Left cardiac atrium (tissue), 4 donors: ENCODE measurements at regions of chr4 and their contacts with region 1.

Region 1: DNA sequence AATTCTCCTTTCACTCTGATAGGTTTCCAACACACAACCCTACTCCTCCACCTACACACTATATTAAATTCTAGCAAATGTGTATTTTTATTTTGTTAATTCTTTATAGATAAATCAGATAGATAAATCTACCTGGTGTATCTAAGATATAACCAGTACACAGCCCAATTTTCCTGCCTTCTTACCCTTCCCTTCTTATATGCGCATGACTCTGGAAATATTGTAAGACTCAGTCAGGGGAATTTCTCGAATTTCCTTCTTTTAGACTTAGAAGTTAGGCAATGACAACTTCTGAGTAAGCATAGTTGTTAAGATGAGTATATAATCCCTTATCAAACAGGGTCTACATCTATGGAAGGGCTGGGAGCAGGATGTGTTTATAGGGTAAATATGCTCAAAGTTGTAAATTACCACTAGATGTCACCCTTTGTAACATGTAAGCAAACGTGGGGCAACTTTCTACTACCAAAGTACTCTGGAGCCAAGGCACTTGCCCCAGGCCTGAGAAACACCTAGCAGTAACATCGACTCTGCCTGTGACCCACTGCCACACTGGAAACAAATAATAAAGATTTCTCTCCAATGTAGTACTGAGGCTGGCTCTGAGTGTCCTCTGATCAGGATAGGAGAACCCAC is 444.7 kb downstream of the IQCM start:
- DNase-seq: no peak
- ATAC-seq: peak; percentile 63 to 71

Region 2: DNA sequence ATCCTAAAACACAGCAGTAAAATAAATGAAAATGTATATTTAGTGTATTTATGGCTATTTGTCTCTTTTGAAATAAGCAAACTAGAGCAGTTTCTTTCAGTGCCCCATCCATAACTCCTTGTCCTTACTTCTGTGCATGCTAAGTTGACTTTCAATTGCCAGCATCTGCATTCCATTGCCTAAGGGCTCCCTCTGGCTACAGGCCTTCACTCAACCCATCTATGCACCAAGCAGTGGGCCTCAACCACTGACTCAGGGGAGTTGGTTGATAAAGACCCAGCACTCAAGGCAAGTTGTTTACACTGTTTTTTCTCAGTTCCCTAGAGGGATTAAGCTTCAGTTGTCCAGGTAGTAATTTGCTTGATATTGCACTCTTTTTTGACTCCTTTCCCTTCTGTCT is 179.0 kb after region 1 on chr4:
- intact Hi-C with region 1: loop called in 1 of 2 experiments (anchors 10 kb)
- DNase-seq: no peak
- ATAC-seq: no peak

Region 3: DNA sequence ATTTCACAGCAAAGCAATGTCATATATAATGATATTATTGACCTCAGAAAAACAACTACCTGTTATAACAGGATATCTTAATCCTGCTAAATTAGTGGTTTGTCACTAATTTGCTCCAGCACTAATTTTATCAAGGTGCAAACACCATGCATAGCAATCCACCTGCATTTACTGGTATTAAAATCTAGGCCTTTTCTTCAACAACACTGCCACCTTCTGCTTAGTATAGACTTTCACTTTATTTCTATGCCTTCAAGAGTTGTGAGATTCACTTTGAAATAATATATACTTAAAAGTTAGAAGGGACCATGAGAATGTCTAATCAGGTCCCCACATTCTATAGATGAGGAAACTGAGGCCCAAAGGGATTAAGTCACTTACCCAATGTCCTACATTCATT is 526.9 kb after region 1 on chr4:
- intact Hi-C with region 1: loop called (anchors 2 to 10 kb)
- DNase-seq: no peak
- ATAC-seq: no peak